ENCODE measurements at regions of chr1 and their contacts with region 1.

Region 1: DNA sequence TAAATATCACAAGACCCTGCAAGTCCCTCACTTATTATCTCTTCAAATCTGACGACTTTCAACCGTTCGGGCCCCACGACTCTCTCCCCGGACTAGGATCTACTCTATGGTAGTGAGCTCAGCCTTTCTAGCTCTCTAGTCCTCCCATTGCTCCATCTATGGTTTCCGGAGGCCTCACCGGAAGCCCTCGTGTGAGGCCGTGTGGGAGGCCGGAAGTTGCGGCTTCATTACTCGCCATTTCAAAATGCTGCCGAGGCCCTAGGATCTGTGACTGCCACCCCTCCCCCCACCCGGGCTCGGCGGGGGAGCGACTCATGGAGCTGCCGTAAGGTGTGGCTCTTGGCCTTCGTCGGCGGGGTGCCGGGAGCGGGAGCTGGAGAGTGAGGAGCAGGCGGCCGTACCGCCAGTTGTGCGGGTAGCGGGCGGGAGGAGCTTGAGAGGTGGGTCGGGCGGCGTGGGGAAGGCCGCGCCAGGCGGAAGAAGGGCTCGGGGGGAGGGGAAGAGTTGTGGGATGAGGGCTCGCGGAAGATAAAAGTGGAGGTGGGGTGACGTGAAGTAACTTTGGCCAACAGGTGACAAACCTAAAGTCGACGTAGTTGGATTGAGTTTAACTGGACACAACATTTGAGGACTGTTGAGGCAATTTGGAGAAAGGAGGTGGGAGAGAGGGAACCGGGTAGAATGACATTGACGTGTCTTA is at the start of gene MDM4:
- DNase-seq: peak; percentile 97
- H3K4me3 Mint-ChIP-seq: no peak within 1 kb of the TSS
- H3K27ac Mint-ChIP-seq: no peak within 1 kb of the TSS
- H3K4me1 Mint-ChIP-seq: peaks cover 33% of the 10 kb centered on the region
- H3K27me3 Mint-ChIP-seq: no peaks in the 10 kb centered on the region
- total RNA-seq, gene MDM4: 81.5 and 85.5 TPM in 2 replicates

Region 2: DNA sequence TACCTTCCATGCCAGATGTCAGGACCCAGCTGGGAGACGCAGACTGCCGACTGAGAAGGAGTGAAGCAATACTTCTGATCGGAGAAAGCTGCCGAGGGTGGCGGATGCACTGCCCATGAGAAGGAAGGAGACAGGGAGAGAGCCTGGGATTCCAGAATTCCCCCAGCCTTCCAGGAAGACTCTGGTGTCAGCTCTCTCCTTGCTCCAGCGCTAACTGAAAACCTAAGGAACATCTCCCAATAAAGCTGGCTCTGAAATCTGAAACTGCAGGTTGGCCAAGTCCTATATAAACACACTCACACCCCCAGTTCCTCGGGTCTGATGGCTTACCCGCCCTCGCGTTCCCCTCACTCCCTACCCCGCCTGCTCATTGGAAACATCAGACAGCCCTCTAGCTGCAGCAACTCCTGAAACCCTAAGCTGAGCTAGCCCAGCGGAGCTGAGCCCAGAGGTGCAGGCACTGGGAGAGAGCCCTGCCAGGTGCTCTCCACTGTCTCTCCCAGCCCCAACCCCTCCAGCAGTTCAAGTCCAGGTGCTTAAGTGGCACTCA is 208.9 kb before region 1 on chr1:
- intact Hi-C with region 1: no loop called
- DNase-seq: no peak
- H3K4me3 Mint-ChIP-seq: no peak overlapping the region
- H3K27ac Mint-ChIP-seq: no peak overlapping the region
- H3K4me1 Mint-ChIP-seq: no peaks in the 10 kb centered on the region
- H3K27me3 Mint-ChIP-seq: peaks cover 28% of the 10 kb centered on the region

Region 3: DNA sequence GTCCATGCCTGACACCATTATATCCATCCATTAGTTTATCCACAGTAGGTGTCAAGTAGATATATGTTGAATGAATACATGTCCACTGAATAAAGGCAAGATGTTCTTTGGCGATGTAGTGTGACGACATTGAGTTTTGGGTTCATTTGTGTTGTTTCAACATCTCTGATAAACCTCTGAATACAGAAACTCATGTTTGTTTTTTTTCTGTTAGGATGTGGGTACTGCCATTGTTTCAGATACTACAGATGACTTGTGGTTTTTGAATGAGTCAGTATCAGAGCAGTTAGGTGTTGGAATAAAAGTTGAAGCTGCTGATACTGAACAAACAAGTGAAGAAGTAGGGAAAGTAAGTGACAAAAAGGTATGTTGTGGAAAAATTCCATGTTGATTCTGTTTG is 28.0 kb after region 1 on chr1:
- intact Hi-C with region 1: loop called (anchors 1 kb)
- DNase-seq: peak; percentile 76
- H3K4me3 Mint-ChIP-seq: peak overlapping the region; percentile 55
- H3K27ac Mint-ChIP-seq: peak overlapping the region; percentile 68
- H3K4me1 Mint-ChIP-seq: peaks cover 53% of the 10 kb centered on the region
- H3K27me3 Mint-ChIP-seq: no peaks in the 10 kb centered on the region

Measured in activated CD4-positive, alpha-beta T cell treated with anti-CD3 and anti-CD28 coated beads, Interleukin-2, amount 10 ng/mL, durations not matched to agents 24 days and 14 days (primary cell).